Activated CD4-positive, alpha-beta memory T cell treated with anti-CD3 and anti-CD28 coated beads, Interleukin-2, amount 10 ng/mL, durations not matched to agents 7 days and 5 days (primary cell): ENCODE measurements at regions of chr12 and their contacts with region 1.

Region 1: GRCh38 chr12:46124848-46125619 is 134.7 kb upstream of the SCAF11 start:
- DNase-seq: peak; percentile 59
- H3K4me3 Mint-ChIP-seq: no peak overlapping the region
- H3K27ac Mint-ChIP-seq: peak overlapping the region; percentile 48
- H3K4me1 Mint-ChIP-seq: peaks cover 5% of the 10 kb centered on the region
- H3K27me3 Mint-ChIP-seq: peaks cover 34% of the 10 kb centered on the region

Region 2: GRCh38 chr12:46108721-46109120 is 16.3 kb before region 1 on chr12:
- CTCF ChIA-PET with region 1: interaction called, 19 read pairs
- POLR2A ChIA-PET with region 1: no interaction called
- DNase-seq: no peak
- H3K4me3 Mint-ChIP-seq: no peak overlapping the region
- H3K27ac Mint-ChIP-seq: no peak overlapping the region
- H3K4me1 Mint-ChIP-seq: no peaks in the 10 kb centered on the region
- H3K27me3 Mint-ChIP-seq: peaks cover 7% of the 10 kb centered on the region

Region 3: GRCh38 chr12:46174061-46174662 is 49.1 kb after region 1 on chr12:
- CTCF ChIA-PET with region 1: no interaction called
- POLR2A ChIA-PET with region 1: no interaction called
- DNase-seq: no peak
- H3K4me3 Mint-ChIP-seq: no peak overlapping the region
- H3K27ac Mint-ChIP-seq: no peak overlapping the region
- H3K4me1 Mint-ChIP-seq: peaks cover 17% of the 10 kb centered on the region
- H3K27me3 Mint-ChIP-seq: no peaks in the 10 kb centered on the region

Region 4: DNA sequence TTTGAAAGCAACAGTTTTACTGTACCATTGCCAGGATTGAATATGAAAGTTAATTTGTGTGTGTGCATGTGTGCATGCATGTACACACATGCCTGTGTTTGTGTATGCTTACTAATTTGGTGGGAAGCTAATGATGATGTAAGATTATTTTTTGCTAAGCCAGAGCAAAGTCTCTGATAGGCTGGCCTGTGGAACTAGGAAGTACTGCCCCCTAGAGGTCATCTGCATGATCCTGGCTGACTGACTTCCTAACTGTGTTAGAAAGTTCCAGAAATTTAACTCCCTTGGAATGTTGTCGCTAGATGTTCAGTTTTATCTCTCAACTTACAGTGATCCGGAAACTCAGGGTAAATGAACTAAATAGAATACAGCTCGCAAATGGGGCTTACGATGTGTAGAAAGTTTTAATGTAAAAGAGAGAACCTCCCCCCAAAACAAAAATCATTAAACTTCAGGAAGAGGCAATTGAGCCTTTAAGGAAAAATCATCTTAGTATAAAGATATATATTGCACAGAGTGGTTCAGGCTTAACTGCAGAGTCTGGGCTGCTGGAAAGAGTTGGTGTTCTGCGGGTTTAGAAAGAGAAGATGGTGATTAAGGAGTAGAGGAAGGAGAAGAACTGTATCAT is 178.1 kb after region 1 on chr12:
- CTCF ChIA-PET with region 1: interaction called, 48 read pairs
- POLR2A ChIA-PET with region 1: no interaction called
- DNase-seq: peak; percentile 39
- H3K4me3 Mint-ChIP-seq: no peak overlapping the region
- H3K27ac Mint-ChIP-seq: no peak overlapping the region
- H3K4me1 Mint-ChIP-seq: peaks cover 1% of the 10 kb centered on the region
- H3K27me3 Mint-ChIP-seq: peaks cover 11% of the 10 kb centered on the region

Region 5: DNA sequence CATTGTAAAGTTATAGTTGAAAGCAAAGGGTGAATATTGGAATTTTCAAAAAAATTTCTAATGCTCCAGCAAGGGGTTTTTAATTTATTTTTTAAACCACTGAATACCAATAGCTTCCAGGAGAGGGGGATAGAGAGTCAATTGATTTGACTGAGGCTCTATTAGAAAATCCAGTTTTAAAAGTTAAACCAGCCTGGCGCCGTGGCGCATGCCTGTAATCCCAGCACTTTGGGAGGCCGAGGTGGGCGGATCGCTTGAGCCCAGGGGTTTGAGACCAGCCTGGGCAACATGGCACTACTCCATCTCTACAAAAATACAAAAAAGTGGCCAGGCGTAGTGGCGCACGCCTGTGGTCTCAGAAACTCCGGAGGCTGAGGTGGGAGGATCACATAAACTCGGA is 550.7 kb after region 1 on chr12:
- CTCF ChIA-PET with region 1: interaction called, 11 read pairs
- POLR2A ChIA-PET with region 1: no interaction called
- DNase-seq: no peak
- H3K4me3 Mint-ChIP-seq: no peak overlapping the region
- H3K27ac Mint-ChIP-seq: no peak overlapping the region
- H3K4me1 Mint-ChIP-seq: peaks cover 6% of the 10 kb centered on the region
- H3K27me3 Mint-ChIP-seq: peaks cover 2% of the 10 kb centered on the region

Region 6: GRCh38 chr12:47021298-47021697 is 896.3 kb after region 1 on chr12:
- CTCF ChIA-PET with region 1: interaction called, 25 read pairs
- POLR2A ChIA-PET with region 1: no interaction called
- DNase-seq: no peak
- H3K4me3 Mint-ChIP-seq: no peak overlapping the region
- H3K27ac Mint-ChIP-seq: no peak overlapping the region
- H3K4me1 Mint-ChIP-seq: peaks cover 6% of the 10 kb centered on the region
- H3K27me3 Mint-ChIP-seq: peaks cover 18% of the 10 kb centered on the region